ENCODE measurements at regions of chr1 and their contacts with region 1.

Region 1: GRCh38 chr1:241627453-241628259 is 12.5 kb downstream of the CHML start:
- DNase-seq: peak; percentile 97
- ATAC-seq: peak; percentile 66
- H3K4me3 ChIP-seq: no peak overlapping the region
- H3K27ac ChIP-seq: 0 out of 2 replicates have a peak overlapping the region, but pooled peaks have one; percentile 0
- H3K4me1 ChIP-seq: peaks cover 33% of the 10 kb centered on the region
- H3K27me3 ChIP-seq: no peaks in the 10 kb centered on the region
- CTCF ChIP-seq: peak; percentile 98

Region 2: DNA sequence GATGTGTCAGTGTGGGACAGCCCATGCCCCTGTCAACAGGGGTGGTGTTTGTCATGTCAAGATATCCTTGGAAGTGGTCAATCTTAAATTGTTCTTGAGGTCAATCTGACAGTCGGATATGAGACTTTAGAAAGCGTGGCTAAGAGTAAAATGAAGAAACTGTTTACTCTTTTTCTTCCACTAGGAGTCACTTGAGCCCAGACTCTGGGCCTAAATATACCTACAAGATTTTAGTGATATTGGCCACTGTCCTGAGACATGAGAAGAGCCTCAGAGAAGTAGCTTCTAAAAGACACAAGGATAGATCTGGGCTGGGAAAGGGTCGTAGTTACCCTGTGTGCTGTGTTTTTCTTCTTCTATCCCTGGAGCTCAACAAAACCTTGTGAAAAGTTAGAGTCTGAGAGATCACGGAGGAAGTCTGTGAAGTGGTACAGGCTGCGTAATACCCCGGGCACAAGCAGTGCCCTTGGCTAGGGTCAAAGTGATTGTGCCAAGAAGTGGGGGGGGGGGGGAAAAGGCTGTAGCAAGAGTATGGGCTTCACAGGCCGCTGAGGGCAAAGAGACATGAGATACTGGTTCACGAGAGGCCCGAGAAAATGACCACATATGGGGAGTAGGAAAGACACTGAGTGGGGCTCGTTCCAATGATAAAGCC is 660.5 kb before region 1 on chr1:
- CTCF ChIA-PET with region 1: no interaction called
- POLR2A ChIA-PET with region 1: no interaction called
- intact Hi-C with region 1: loop called (anchors 5 kb)
- DNase-seq: peak; percentile 84
- ATAC-seq: peak; percentile 60
- H3K4me3 ChIP-seq: no peak overlapping the region
- H3K27ac ChIP-seq: no peak overlapping the region
- H3K4me1 ChIP-seq: peaks cover 10% of the 10 kb centered on the region; the same call in 1 of the 2 replicates
- H3K27me3 ChIP-seq: peaks cover 86% of the 10 kb centered on the region
- CTCF ChIP-seq: peak; percentile 91

Region 3: DNA sequence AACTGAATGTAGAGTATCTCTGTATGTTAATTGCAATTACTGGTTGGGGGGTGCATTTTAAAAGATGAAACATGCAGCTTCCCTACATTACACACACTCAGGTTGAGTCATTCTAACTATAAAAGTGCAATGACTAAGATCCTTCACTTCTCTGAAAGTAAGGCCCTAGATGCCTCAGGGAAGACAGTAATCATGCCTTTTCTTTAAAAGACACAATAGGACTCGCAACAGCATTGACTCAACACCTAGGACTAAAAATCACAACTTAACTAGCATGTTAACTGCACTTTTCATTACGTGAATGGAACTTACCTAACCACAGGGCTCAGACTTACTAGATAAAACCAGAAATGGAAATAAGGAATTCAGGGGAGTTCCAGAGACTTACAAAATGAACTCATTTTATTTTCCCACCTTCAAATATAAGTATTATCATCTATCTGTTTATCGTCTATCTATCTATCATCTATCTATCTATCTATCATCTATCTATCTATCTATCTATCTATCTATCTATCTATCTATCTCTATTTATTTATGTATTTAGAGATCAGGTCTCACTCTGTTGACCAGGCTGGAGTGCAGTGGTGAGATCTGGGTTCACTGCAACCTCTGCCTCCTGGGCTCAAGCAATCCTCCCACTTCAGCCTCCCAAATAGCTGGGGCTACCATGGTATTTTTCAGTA is 35.2 kb before region 1 on chr1:
- CTCF ChIA-PET with region 1: no interaction called
- POLR2A ChIA-PET with region 1: no interaction called
- intact Hi-C with region 1: loop called (anchors 1 kb)
- DNase-seq: peak; percentile 100
- ATAC-seq: peak; percentile 82
- H3K4me3 ChIP-seq: peak overlapping the region; percentile 20
- H3K27ac ChIP-seq: peak overlapping the region; percentile 89
- H3K4me1 ChIP-seq: peaks cover 43% of the 10 kb centered on the region
- H3K27me3 ChIP-seq: no peaks in the 10 kb centered on the region
- CTCF ChIP-seq: no peak

Region 4: GRCh38 chr1:241762713-241763339 is 135.2 kb after region 1 on chr1:
- CTCF ChIA-PET with region 1: no interaction called
- POLR2A ChIA-PET with region 1: no interaction called
- intact Hi-C with region 1: loop called (anchors 5 kb)
- DNase-seq: peak; percentile 87
- ATAC-seq: peak; percentile 93
- H3K4me3 ChIP-seq: no peak overlapping the region
- H3K27ac ChIP-seq: no peak overlapping the region
- H3K4me1 ChIP-seq: peaks cover 13% of the 10 kb centered on the region
- H3K27me3 ChIP-seq: no peaks in the 10 kb centered on the region
- CTCF ChIP-seq: no peak